ENCODE measurements at regions of chrX and their contacts with region 1.

Region 1: GRCh38 chrX:55160685-55161552 is 59.2 kb upstream of the PAGE5 start:
- DNase-seq: peak; percentile 92
- H3K4me3 Mint-ChIP-seq: peak overlapping the region; percentile 89
- H3K27ac Mint-ChIP-seq: peak overlapping the region; percentile 93
- H3K4me1 Mint-ChIP-seq: no peaks in the 10 kb centered on the region
- H3K27me3 Mint-ChIP-seq: no peaks in the 10 kb centered on the region

Region 2: DNA sequence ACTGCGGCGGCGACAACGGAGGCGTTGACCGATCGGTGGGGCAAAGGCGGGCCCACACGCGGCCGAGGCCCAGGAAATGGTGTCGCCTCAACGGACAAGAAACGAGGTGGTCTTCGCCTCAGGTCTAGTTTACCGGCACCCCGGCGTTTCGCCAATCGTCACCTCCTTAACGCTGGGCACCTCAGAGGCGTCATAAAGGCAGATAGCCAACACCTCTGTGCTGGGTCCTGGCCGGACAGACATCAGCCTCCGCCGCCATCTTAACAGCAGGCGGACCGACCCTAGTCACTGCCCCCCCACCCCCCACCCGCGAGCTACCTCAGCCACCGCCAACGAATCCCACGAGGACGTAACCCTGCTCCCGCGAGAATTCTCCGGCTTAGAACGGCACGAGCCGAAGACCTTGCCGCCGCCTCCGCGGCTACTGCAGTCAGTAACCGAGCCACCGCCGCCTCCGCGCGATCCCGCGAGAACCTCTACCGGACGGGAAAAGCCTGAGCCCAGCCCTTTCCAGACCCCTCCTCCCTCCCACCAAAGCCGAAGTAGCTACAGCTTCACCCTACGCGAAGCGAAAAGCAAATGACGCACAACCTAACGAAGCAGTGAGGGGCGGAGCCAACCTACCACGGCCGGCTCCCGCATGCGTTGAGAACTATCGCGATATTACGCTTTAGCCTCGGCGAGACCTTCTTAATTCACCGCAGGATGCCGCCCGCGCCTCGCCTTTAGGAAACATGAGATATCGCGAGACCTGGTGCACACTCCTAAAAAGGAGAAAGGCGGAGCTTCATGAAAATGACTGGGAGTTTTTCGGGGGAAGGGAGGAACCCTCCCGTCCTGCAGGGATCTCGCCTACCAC is 1477.1 kb before region 1 on chrX:
- CTCF ChIA-PET with region 1: no interaction called
- intact Hi-C with region 1: loop called (anchors 5 kb)
- DNase-seq: peak; percentile 96
- H3K4me3 Mint-ChIP-seq: peak overlapping the region; percentile 92
- H3K27ac Mint-ChIP-seq: peak overlapping the region; percentile 94
- H3K4me1 Mint-ChIP-seq: peaks cover 27% of the 10 kb centered on the region
- H3K27me3 Mint-ChIP-seq: no peaks in the 10 kb centered on the region

Region 3: DNA sequence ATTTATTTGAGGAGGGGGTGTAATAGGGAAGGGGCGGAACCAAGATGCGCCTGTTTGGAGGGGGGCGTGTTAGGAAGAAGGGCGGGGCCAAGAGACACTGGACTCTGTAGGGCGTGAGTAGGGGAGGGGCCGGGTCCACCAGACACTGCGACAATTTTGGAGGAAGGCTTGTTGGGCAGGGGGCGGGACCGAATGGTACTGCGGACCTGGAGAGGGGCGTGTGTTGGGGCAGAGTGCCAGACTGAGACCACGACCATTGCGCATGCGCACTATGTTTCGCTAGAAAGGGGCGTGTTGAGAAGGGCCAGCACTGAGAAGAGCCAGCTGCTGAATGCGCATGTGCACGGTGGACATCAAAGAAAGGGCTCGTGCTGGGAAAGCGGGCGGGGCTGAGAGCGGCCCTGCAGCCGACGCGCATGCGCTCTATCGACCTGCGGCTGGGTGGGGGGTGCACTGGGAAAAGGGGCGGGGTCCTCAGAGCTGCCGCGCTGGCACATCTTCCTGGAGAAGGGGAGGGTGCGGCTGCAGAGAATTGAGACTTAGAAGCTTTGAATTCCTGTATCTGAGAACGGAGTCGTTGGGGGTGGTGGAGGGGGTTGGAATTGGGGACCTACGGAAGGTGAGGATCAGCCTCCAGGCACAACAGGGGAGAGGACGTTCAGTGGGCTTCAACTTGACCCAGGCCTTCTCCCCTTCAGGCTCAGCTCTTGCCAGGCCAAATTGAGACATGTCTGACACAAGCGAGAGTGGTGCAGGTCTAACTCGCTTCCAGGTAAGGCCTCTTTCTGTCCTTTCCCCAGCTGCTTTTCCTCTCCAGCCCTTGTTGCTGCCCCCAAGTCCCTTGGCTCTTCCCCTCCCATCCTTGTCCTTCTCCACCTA is 352.1 kb before region 1 on chrX:
- CTCF ChIA-PET with region 1: no interaction called
- intact Hi-C with region 1: loop called (anchors 2 kb)
- DNase-seq: peak; percentile 92
- H3K4me3 Mint-ChIP-seq: peak overlapping the region; percentile 88
- H3K27ac Mint-ChIP-seq: peak overlapping the region; percentile 88
- H3K4me1 Mint-ChIP-seq: peaks cover 15% of the 10 kb centered on the region
- H3K27me3 Mint-ChIP-seq: no peaks in the 10 kb centered on the region

Region 4: GRCh38 chrX:54999717-55000598 is 161.0 kb before region 1 on chrX and contains the start of gene APEX2:
- CTCF ChIA-PET with region 1: no interaction called
- intact Hi-C with region 1: loop called (anchors 2 kb)
- DNase-seq: peak; percentile 89
- H3K4me3 Mint-ChIP-seq: peak within 1 kb of the TSS; percentile 80
- H3K27ac Mint-ChIP-seq: peak within 1 kb of the TSS; percentile 90
- H3K4me1 Mint-ChIP-seq: peaks cover 20% of the 10 kb centered on the region
- H3K27me3 Mint-ChIP-seq: no peaks in the 10 kb centered on the region
- total RNA-seq, gene APEX2: 34.7 to 36.3 TPM

Region 5: GRCh38 chrX:55342533-55343501 is 181.9 kb after region 1 on chrX:
- CTCF ChIA-PET with region 1: no interaction called
- intact Hi-C with region 1: loop called (anchors 2 kb)
- DNase-seq: peak; percentile 59
- H3K4me3 Mint-ChIP-seq: no peak overlapping the region
- H3K27ac Mint-ChIP-seq: no peak overlapping the region
- H3K4me1 Mint-ChIP-seq: peaks cover 20% of the 10 kb centered on the region
- H3K27me3 Mint-ChIP-seq: no peaks in the 10 kb centered on the region